Activated naive CD4-positive, alpha-beta T cell treated with anti-CD3 and anti-CD28 coated beads for 36 hours (primary cell): ENCODE measurements at regions of chr12 and their contacts with region 1.

Region 1: GRCh38 chr12:93441617-93442410 is at the start of gene UBE2N:
- DNase-seq: peak; percentile 96
- H3K4me3 Mint-ChIP-seq: peak within 1 kb of the TSS; percentile 95
- H3K27ac Mint-ChIP-seq: peak within 1 kb of the TSS; percentile 94
- H3K4me1 Mint-ChIP-seq: peaks cover 46% of the 10 kb centered on the region
- H3K27me3 Mint-ChIP-seq: no peaks in the 10 kb centered on the region
- total RNA-seq, gene UBE2N: 143 TPM

Region 2: DNA sequence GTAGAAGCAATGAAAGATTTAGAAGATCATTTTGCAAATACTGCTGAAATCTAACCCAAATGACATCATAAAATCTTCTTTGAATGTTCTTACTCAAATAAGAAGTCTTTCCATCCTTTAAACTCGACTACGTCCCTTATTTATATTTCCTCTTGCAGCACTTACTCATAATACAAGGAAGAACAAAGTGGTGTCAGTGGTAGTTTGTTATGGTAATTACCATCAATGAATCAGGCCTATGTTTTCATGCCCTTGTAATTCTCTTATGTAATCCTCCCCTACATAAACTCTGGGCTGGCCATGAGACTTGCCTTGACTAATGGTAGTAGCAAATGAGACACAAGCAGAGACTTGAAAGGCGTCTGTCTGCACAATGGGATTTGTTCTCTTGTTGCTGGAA is 529.8 kb before region 1 on chr12:
- CTCF ChIA-PET with region 1: no interaction called
- intact Hi-C with region 1: loop called (anchors 5 kb)
- DNase-seq: peak; percentile 60
- H3K4me3 Mint-ChIP-seq: no peak overlapping the region
- H3K27ac Mint-ChIP-seq: peak overlapping the region; percentile 74
- H3K4me1 Mint-ChIP-seq: peaks cover 56% of the 10 kb centered on the region
- H3K27me3 Mint-ChIP-seq: no peaks in the 10 kb centered on the region

Region 3: GRCh38 chr12:93167841-93168492 is 273.8 kb before region 1 on chr12:
- CTCF ChIA-PET with region 1: no interaction called
- intact Hi-C with region 1: loop called (anchors 2 kb)
- DNase-seq: peak; percentile 85
- H3K4me3 Mint-ChIP-seq: peak overlapping the region; percentile 49
- H3K27ac Mint-ChIP-seq: peak overlapping the region; percentile 67
- H3K4me1 Mint-ChIP-seq: peaks cover 17% of the 10 kb centered on the region
- H3K27me3 Mint-ChIP-seq: peaks cover 7% of the 10 kb centered on the region

Region 4: GRCh38 chr12:93467351-93468007 is 25.7 kb after region 1 on chr12 and contains the start of gene MRPL42:
- CTCF ChIA-PET with region 1: interaction called, 5 read pairs
- intact Hi-C with region 1: loop called (anchors 1 kb)
- DNase-seq: peak; percentile 95
- H3K4me3 Mint-ChIP-seq: peak within 1 kb of the TSS; percentile 95
- H3K27ac Mint-ChIP-seq: peak within 1 kb of the TSS; percentile 91
- H3K4me1 Mint-ChIP-seq: peaks cover 32% of the 10 kb centered on the region
- H3K27me3 Mint-ChIP-seq: no peaks in the 10 kb centered on the region
- total RNA-seq, gene MRPL42: 93.8 to 95.8 TPM

Region 5: DNA sequence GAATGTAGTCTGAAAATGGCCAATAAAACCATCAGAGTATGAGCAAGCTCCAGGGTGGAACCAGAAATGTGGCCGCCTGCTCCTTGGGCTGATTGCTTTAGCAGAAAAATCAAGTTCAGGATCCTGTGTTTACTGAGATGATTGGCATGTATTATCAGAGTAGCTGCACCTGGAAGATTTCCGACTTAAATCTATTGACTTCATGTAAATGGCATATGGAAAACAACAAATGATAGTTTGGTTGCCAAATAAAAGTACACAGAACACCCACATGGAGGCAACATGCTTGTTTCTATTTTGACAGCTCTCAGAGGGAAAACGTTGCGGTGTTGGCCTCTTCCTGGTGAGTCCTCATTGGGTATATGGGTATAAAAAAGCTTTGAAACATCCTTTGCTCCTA is 161.9 kb after region 1 on chr12:
- CTCF ChIA-PET with region 1: no interaction called
- intact Hi-C with region 1: no loop called
- DNase-seq: no peak
- H3K4me3 Mint-ChIP-seq: no peak overlapping the region
- H3K27ac Mint-ChIP-seq: no peak overlapping the region
- H3K4me1 Mint-ChIP-seq: no peaks in the 10 kb centered on the region
- H3K27me3 Mint-ChIP-seq: peaks cover 10% of the 10 kb centered on the region